Dendritic cell treated with granulocyte-macrophage colony-stimulating factor and Interleukin-4, amounts not matched to agents 40 ng/mL and 50 ng/mL, for 4 days (primary cell): ENCODE measurements at regions of chr19 and their contacts with region 1.

Region 1: GRCh38 chr19:49665351-49666119 is at the starts of genes BCL2L12 and IRF3:
- H3K4me3 Mint-ChIP-seq: peak within 1 kb of the TSS; percentile 99
- H3K27ac Mint-ChIP-seq: peak within 1 kb of the TSS; percentile 96
- H3K4me1 Mint-ChIP-seq: peaks cover 47% of the 10 kb centered on the region
- H3K27me3 Mint-ChIP-seq: no peaks in the 10 kb centered on the region

Region 2: GRCh38 chr19:49580264-49581006 is 85.1 kb before region 1 on chr19 and contains the start of gene NOSIP:
- intact Hi-C with region 1: loop called (anchors 1 kb)
- H3K4me3 Mint-ChIP-seq: peak within 1 kb of the TSS; percentile 85
- H3K27ac Mint-ChIP-seq: peak within 1 kb of the TSS; percentile 89
- H3K4me1 Mint-ChIP-seq: peaks cover 35% of the 10 kb centered on the region
- H3K27me3 Mint-ChIP-seq: no peaks in the 10 kb centered on the region